ENCODE measurements at regions of chr1 and their contacts with region 1.

Region 1: GRCh38 chr1:3483801-3484444 is 29.5 kb downstream of the ARHGEF16 start:
- DNase-seq: peak in 1 of 2 donors; percentile 66
- ATAC-seq: peak in 6 of 8 donors; percentile 39 to 66 (median 57)
- H3K4me3 ChIP-seq: no peak overlapping the region
- H3K27ac ChIP-seq: no peak overlapping the region
- H3K4me1 ChIP-seq: no peaks in the 10 kb centered on the region
- H3K27me3 ChIP-seq: peaks cover 0 to 25% (median 0%) of the 10 kb centered on the region in 7 donors
- CTCF ChIP-seq: peak; percentile 68 to 93 (median 85)

Region 2: DNA sequence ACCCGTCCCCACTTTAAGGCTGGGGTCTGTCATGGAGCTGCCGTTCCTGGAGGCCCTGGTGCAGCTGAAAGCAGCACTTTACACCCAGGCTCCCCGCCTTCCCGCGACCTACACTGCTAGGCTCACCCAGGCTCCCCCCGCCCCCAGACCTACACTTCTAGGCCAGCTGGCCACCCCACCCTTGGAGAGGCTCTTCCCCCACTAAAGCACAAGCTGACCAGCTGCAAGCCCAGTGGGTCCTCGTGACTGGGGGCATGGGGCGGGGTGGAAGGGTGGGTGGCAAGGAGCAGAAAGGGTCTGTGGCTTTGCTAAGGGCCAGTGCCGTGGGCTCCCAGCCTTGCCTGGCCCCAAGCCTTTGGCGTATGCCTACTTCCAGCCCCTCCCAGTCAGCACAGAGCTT is 39.2 kb before region 1 on chr1:
- intact Hi-C with region 1: loop called in 1 of 10 experiments (anchors 5 kb)
- DNase-seq: peak in 1 of 2 donors; percentile 3
- ATAC-seq: no peak
- H3K4me3 ChIP-seq: no peak overlapping the region
- H3K27ac ChIP-seq: no peak overlapping the region
- H3K4me1 ChIP-seq: no peaks in the 10 kb centered on the region
- H3K27me3 ChIP-seq: peaks cover 0 to 53% (median 44%) of the 10 kb centered on the region in 7 donors
- CTCF ChIP-seq: no peak

Region 3: DNA sequence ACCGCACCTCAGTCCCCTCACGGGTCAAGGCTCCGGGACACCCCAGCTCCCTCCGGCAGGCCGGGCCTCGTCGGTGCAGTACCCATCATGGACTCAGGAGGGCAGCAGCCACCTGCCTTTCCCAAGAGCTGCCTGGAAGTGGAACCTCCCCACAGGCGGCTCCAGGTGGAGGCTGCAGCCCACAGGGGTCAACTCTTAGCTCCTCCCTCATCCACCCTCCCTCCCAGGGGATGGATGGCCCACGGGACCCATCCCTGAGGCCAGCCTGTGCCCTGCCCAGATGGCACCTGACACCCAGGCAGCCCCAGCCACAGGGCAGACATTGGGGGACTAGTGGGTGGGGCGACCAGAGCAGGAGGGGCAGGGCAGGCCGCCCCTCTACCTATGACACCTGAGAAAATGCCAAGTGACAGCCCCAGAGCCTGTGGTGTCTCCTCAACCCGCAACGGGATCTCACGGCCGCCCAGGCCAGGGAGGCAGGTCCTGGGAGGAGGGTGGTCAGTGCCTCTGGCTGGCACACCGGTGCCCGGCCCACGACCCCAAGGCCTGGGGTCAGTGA is 30.6 kb before region 1 on chr1:
- intact Hi-C with region 1: loop called in 9 of 10 experiments (anchors 1 to 5 kb)
- DNase-seq: peak; percentile 66 to 79
- ATAC-seq: peak; percentile 68 to 90 (median 81)
- H3K4me3 ChIP-seq: no peak overlapping the region
- H3K27ac ChIP-seq: no peak overlapping the region
- H3K4me1 ChIP-seq: peaks cover 15 to 33% (median 25%) of the 10 kb centered on the region in 9 donors
- H3K27me3 ChIP-seq: peaks cover 3 to 46% (median 25%) of the 10 kb centered on the region in 7 donors
- CTCF ChIP-seq: peak; percentile 90 to 97 (median 96)

Region 4: DNA sequence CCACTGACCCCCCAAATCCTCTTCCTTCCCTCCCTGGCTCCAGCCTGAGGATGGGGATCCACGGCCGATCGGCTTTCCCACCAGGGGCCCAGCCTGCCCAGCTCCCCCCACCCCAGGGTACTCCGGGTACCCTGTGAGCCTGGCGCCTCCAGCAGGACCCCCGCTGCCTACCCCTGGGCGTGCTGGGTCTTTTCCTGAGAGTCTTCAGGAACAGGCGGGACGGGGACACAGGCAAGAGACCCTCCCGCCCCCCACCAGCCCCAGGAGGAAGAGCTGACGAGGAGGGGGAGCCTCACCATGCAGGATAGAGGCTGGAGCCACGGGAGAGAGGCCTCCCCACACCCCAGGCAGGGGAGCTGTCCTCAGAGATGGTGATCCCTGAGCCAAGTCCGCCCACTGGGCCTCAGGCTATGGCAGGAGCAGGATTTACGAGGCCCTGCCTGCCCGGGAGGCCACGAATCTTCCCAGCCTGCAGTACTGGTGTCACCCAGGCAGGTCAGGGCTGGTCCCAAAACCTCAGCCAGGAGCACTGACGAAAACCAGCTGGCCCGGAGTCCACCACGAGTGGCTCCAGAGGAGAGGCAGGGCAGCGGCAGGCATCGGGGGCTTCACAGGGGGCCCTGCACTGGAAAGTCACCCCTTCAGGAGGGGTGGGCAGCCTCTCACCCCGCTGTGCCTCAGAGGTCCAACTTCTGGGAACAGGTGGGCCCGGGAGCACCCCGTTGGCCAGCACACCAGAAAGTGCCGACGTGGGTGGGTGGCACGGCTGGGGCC is 69.4 kb after region 1 on chr1:
- intact Hi-C with region 1: no loop called
- DNase-seq: no peak
- ATAC-seq: no peak
- H3K4me3 ChIP-seq: no peak overlapping the region
- H3K27ac ChIP-seq: no peak overlapping the region
- H3K4me1 ChIP-seq: peaks cover under 1 to 15% (median 5%) of the 10 kb centered on the region in 9 donors
- H3K27me3 ChIP-seq: peaks cover 0 to 11% (median 0%) of the 10 kb centered on the region in 7 donors
- CTCF ChIP-seq: no peak

Measured in heart right ventricle (tissue), 16 donors.